ENCODE measurements at regions of chr9 and their contacts with region 1.

Region 1: GRCh38 chr9:33878691-33879366 is 61.9 kb downstream of the UBE2R2 start:
- DNase-seq: no peak
- ATAC-seq: peak in 1 of 4 donors; percentile 27
- H3K4me3 ChIP-seq: no peak overlapping the region
- H3K27ac ChIP-seq: peak overlapping the region in 3 of 12 donors; percentile 8 to 38 (median 35)
- H3K4me1 ChIP-seq: peaks cover 0 to 54% (median 33%) of the 10 kb centered on the region in 12 donors
- H3K27me3 ChIP-seq: no peaks in the 10 kb centered on the region
- CTCF ChIP-seq: no peak
- POLR2A ChIP-seq: no peak

Region 2: GRCh38 chr9:33939924-33940874 is 61.4 kb after region 1 on chr9:
- intact Hi-C with region 1: loop called in 2 of 10 experiments (anchors 10 kb)
- DNase-seq: no peak
- ATAC-seq: no peak
- H3K4me3 ChIP-seq: no peak overlapping the region
- H3K27ac ChIP-seq: no peak overlapping the region
- H3K4me1 ChIP-seq: peaks cover 0 to 13% (median 0%) of the 10 kb centered on the region in 12 donors
- H3K27me3 ChIP-seq: no peaks in the 10 kb centered on the region
- CTCF ChIP-seq: no peak
- POLR2A ChIP-seq: no peak